ENCODE measurements at regions of chr6 and their contacts with region 1.

Region 1: GRCh38 chr6:24513602-24514001 is 18.8 kb downstream of the ALDH5A1 start:
- DNase-seq: no peak
- ATAC-seq: no peak
- H3K4me3 ChIP-seq: no peak overlapping the region
- H3K27ac ChIP-seq: no peak overlapping the region
- H3K4me1 ChIP-seq: no peaks in the 10 kb centered on the region
- H3K27me3 ChIP-seq: no peaks in the 10 kb centered on the region
- CTCF ChIP-seq: no peak

Region 2: GRCh38 chr6:24448828-24449535 is 64.6 kb before region 1 on chr6:
- intact Hi-C with region 1: loop called in 1 of 10 experiments (anchors 5 kb)
- DNase-seq: no peak
- ATAC-seq: no peak
- H3K4me3 ChIP-seq: no peak overlapping the region
- H3K27ac ChIP-seq: no peak overlapping the region
- H3K4me1 ChIP-seq: no peaks in the 10 kb centered on the region
- H3K27me3 ChIP-seq: no peaks in the 10 kb centered on the region
- CTCF ChIP-seq: no peak

Measured in heart right ventricle (tissue), 16 donors.